Heart right ventricle (tissue), 16 donors: ENCODE measurements at regions of chr17 and their contacts with region 1.

Region 1: GRCh38 chr17:41291306-41291705 is 11.3 kb downstream of the KRTAP29-1 start:
- DNase-seq: no peak
- ATAC-seq: no peak
- H3K4me3 ChIP-seq: no peak overlapping the region
- H3K27ac ChIP-seq: no peak overlapping the region
- H3K4me1 ChIP-seq: no peaks in the 10 kb centered on the region
- H3K27me3 ChIP-seq: peaks cover 0 to 37% (median 10%) of the 10 kb centered on the region in 7 donors
- CTCF ChIP-seq: no peak

Region 2: GRCh38 chr17:40949419-40949818 is 341.9 kb before region 1 on chr17:
- intact Hi-C with region 1: loop called in 1 of 10 experiments (anchors 10 kb)
- DNase-seq: no peak
- ATAC-seq: peak in 1 of 8 donors; percentile 64
- H3K4me3 ChIP-seq: no peak overlapping the region
- H3K27ac ChIP-seq: no peak overlapping the region
- H3K4me1 ChIP-seq: no peaks in the 10 kb centered on the region
- H3K27me3 ChIP-seq: peaks cover 0 to 67% (median 42%) of the 10 kb centered on the region in 7 donors
- CTCF ChIP-seq: no peak